GM10248 (cell line): ENCODE measurements at regions of chr10 and their contacts with region 1.

Region 1: GRCh38 chr10:31851216-31851615 is 77.4 kb downstream of the ARHGAP12 start:
- DNase-seq: no peak
- CTCF ChIP-seq: no peak

Region 2: DNA sequence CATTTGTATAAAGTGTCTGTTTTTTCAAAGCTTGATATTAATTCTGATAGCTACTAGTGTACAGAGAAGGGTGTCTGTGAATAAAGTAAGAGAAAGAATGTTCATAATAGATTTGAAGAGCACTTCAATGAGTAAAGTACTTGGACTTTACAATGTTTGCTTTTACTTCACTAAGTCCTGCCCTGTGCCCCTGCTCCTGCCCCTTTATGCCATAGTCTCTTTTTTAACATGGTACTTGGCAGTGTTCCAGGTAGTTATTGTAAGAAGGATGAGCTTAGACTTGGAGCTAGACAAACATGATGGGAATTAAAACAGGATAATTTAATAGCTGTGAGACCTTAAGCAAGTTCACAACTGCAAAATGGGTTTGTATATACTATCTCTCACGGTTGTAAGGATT is 491.2 kb before region 1 on chr10:
- CTCF ChIA-PET with region 1: no interaction called
- POLR2A ChIA-PET with region 1: no interaction called
- DNase-seq: no peak
- CTCF ChIP-seq: no peak

Region 3: GRCh38 chr10:31808258-31809218 is 42.7 kb before region 1 on chr10:
- CTCF ChIA-PET with region 1: no interaction called
- POLR2A ChIA-PET with region 1: no interaction called
- DNase-seq: peak; percentile 36
- CTCF ChIP-seq: peak; percentile 34

Region 4: DNA sequence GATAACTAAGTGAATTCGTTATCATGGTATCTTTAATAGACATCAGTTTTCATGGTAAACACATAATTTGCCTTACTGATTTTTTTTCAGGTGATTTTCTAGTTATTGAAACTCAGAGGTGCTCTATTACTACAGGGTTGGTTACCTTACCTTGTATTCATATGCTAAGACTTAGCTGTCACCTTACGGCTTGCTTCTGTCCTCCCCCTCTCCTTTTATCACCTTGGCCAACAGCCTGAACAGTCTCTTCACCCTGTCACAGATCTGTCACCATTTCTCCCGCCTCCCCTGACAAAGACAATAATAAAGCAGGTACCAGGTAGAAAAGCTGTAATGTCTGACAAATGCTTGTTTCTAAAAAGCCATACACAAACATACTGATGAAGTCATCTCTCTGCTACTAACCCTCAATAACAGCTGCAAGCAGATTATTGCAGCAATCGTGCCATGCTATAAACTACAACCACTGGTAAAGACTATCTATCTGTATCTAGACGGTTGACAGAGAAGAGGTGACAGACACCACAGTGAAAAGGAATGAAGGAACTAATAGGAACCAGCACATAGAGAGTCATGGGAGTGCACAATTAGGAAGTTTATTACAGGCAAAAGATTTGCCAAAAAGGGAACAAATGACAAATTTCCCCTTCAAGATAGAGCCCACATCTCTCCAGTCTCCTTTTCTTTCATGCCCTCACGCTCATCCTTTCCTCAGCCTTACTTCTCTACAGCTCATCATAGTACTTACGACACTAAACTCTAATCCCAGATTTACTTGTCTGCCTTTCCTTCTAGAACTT is 20.2 kb after region 1 on chr10:
- CTCF ChIA-PET with region 1: no interaction called
- POLR2A ChIA-PET with region 1: no interaction called
- DNase-seq: no peak
- CTCF ChIP-seq: no peak

Region 5: GRCh38 chr10:32005050-32005449 is 153.8 kb after region 1 on chr10:
- CTCF ChIA-PET with region 1: interaction called, 13 read pairs
- POLR2A ChIA-PET with region 1: no interaction called
- DNase-seq: peak; percentile 34
- CTCF ChIP-seq: peak; percentile 50